CD8-positive, alpha-beta T cell (primary cell): ENCODE measurements at regions of chr7 and their contacts with region 1.

Region 1: GRCh38 chr7:27739909-27740448 is at the start of gene TAX1BP1:
- DNase-seq: peak; percentile 88 to 98 (median 96)
- ATAC-seq: peak; percentile 91
- H3K4me3 ChIP-seq: peak within 1 kb of the TSS; percentile 97 to 100
- H3K4me3 Mint-ChIP-seq: peak within 1 kb of the TSS; percentile 99
- H3K27ac ChIP-seq: peak within 1 kb of the TSS; percentile 97 to 99
- H3K27ac Mint-ChIP-seq: peak within 1 kb of the TSS; percentile 99
- H3K4me1 ChIP-seq: peaks cover 27% of the 10 kb centered on the region
- H3K4me1 Mint-ChIP-seq: peaks cover 40% of the 10 kb centered on the region
- H3K27me3 ChIP-seq: no peaks in the 10 kb centered on the region
- H3K27me3 Mint-ChIP-seq: no peaks in the 10 kb centered on the region
- CTCF ChIP-seq: no peak
- total RNA-seq, gene TAX1BP1: 132 to 139 TPM

Region 2: GRCh38 chr7:25951031-25951948 is 1788.7 kb before region 1 on chr7:
- CTCF ChIA-PET with region 1: no interaction called
- POLR2A ChIA-PET with region 1: no interaction called
- intact Hi-C with region 1: loop called in 1 of 2 experiments (anchors 5 kb)
- DNase-seq: peak; percentile 70 to 93 (median 87)
- ATAC-seq: peak; percentile 97
- H3K4me3 ChIP-seq: peak overlapping the region; percentile 54 to 65
- H3K4me3 Mint-ChIP-seq: peak overlapping the region; percentile 90
- H3K27ac ChIP-seq: peak overlapping the region in 1 of 2 experiments; percentile 27
- H3K27ac Mint-ChIP-seq: peak overlapping the region; percentile 76
- H3K4me1 ChIP-seq: peaks cover 18% of the 10 kb centered on the region
- H3K4me1 Mint-ChIP-seq: peaks cover 22% of the 10 kb centered on the region
- H3K27me3 ChIP-seq: no peaks in the 10 kb centered on the region
- H3K27me3 Mint-ChIP-seq: peaks cover 2% of the 10 kb centered on the region
- CTCF ChIP-seq: no peak

Region 3: DNA sequence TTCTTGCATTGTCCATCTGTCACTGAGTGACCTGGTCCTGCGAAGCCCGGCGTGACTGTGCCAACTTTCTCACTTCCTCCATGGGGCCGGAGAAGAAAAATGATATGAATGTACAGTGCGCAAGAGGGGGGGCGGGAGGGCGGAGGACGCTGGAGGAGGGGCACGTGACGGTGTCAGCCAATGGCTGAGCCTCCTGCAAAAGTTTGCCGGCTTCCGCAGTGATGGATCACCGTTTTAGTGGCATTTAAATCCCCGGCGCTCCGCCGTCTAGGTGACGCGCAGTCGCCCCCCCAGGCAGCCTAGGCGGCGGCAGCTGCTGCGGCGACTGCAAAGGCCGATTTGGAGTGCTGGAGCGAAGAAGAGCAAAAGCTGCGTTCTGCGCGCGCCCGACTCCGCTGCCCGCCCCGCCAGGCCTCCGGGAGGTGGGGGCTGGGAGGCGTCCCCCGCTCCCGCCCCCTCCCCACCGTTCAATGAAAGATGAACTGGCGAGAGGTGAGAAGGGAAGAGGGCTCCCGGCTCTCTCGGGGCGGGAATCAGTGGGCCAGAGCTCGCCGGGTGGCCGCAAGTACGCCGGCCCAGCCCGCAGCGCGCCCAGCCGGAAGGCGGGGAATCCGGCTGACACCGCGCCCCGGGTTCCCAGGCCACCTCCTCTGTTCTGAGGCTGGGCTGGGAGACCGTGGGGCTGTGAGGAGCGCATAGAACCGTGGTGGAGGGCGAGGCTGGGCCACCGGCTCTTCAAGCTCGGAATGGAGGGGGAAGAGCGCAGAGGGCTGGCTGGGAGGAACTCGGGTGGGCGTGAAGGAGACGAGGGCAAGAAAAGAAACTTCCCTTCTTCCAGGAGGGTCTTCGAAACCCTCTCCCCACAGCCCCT is 643.8 kb before region 1 on chr7 and contains the start of gene HOXA1:
- CTCF ChIA-PET with region 1: no interaction called
- POLR2A ChIA-PET with region 1: no interaction called
- intact Hi-C with region 1: loop called (anchors 5 to 10 kb)
- DNase-seq: peak; percentile 44 to 90 (median 74)
- ATAC-seq: peak; percentile 91
- H3K4me3 ChIP-seq: peak within 1 kb of the TSS; percentile 76 to 80
- H3K4me3 Mint-ChIP-seq: peak within 1 kb of the TSS; percentile 90
- H3K27ac ChIP-seq: peak within 1 kb of the TSS; percentile 42 to 46
- H3K27ac Mint-ChIP-seq: peak within 1 kb of the TSS; percentile 82
- H3K4me1 ChIP-seq: peaks cover 21% of the 10 kb centered on the region
- H3K4me1 Mint-ChIP-seq: peaks cover 35% of the 10 kb centered on the region
- H3K27me3 ChIP-seq: peaks cover 0 to 15% of the 10 kb centered on the region in 2 experiments
- H3K27me3 Mint-ChIP-seq: peaks cover 42% of the 10 kb centered on the region
- CTCF ChIP-seq: no peak
- total RNA-seq, gene HOXA1: 0.79 to 0.83 TPM

Region 4: GRCh38 chr7:27662490-27663205 is 77.3 kb before region 1 on chr7 and contains the start of gene HIBADH:
- CTCF ChIA-PET with region 1: interaction called, 6 read pairs
- POLR2A ChIA-PET with region 1: interaction called, 55 read pairs
- intact Hi-C with region 1: loop called (anchors 1 kb)
- DNase-seq: peak; percentile 90 to 99 (median 94)
- ATAC-seq: peak; percentile 92
- H3K4me3 ChIP-seq: peak within 1 kb of the TSS; percentile 70 to 97
- H3K4me3 Mint-ChIP-seq: peak within 1 kb of the TSS; percentile 88
- H3K27ac ChIP-seq: peak within 1 kb of the TSS; percentile 79 to 84
- H3K27ac Mint-ChIP-seq: peak within 1 kb of the TSS; percentile 94
- H3K4me1 ChIP-seq: peaks cover 20% of the 10 kb centered on the region
- H3K4me1 Mint-ChIP-seq: peaks cover 33% of the 10 kb centered on the region
- H3K27me3 ChIP-seq: no peaks in the 10 kb centered on the region
- H3K27me3 Mint-ChIP-seq: no peaks in the 10 kb centered on the region
- CTCF ChIP-seq: no peak
- total RNA-seq, gene HIBADH: 6.8 to 7.3 TPM

Region 5: DNA sequence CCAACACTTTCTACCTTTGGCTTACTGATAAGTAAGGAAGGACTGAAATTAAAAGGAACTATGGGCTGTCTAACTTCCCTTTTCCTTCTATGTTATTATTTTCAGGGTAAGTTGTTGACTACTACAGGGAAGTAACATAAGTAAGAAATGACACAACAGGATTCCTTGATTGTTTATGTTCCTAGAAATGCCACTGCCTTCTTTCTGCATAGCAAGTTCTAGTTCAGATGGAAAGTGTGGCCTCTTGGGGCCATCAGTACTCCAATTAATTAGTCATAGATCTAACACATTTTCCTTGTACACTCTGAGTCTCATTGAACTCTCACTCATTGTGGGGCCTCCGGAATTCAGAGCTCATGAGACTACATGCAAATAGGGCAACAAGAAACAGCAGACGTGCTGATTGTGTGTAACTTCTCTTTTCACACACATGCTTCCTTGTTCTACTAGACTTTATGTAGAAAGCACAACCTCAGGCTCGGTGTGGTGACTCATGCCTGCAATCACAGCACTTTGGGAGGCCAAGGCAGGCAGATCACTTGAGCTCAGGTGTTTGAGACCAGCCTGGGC is 42.0 kb before region 1 on chr7:
- CTCF ChIA-PET with region 1: interaction called, 3 read pairs
- POLR2A ChIA-PET with region 1: no interaction called
- intact Hi-C with region 1: loop called in 1 of 2 experiments (anchors 5 kb)
- DNase-seq: peak in 1 of 9 experiments; percentile 17
- ATAC-seq: no peak
- H3K4me3 ChIP-seq: no peak overlapping the region
- H3K4me3 Mint-ChIP-seq: no peak overlapping the region
- H3K27ac ChIP-seq: no peak overlapping the region
- H3K27ac Mint-ChIP-seq: no peak overlapping the region
- H3K4me1 ChIP-seq: no peaks in the 10 kb centered on the region
- H3K4me1 Mint-ChIP-seq: no peaks in the 10 kb centered on the region
- H3K27me3 ChIP-seq: no peaks in the 10 kb centered on the region
- H3K27me3 Mint-ChIP-seq: peaks cover 15% of the 10 kb centered on the region
- CTCF ChIP-seq: no peak

Region 6: GRCh38 chr7:27784393-27785053 is 44.5 kb after region 1 on chr7:
- CTCF ChIA-PET with region 1: interaction called, 3 read pairs
- POLR2A ChIA-PET with region 1: interaction called, 4 read pairs
- intact Hi-C with region 1: loop called (anchors 5 kb)
- DNase-seq: peak in 3 of 9 experiments; percentile 23 to 69 (median 61)
- ATAC-seq: peak; percentile 64
- H3K4me3 ChIP-seq: no peak overlapping the region
- H3K4me3 Mint-ChIP-seq: no peak overlapping the region
- H3K27ac ChIP-seq: no peak overlapping the region
- H3K27ac Mint-ChIP-seq: peak overlapping the region; percentile 4
- H3K4me1 ChIP-seq: no peaks in the 10 kb centered on the region
- H3K4me1 Mint-ChIP-seq: peaks cover 12% of the 10 kb centered on the region
- H3K27me3 ChIP-seq: no peaks in the 10 kb centered on the region
- H3K27me3 Mint-ChIP-seq: no peaks in the 10 kb centered on the region
- CTCF ChIP-seq: peak; percentile 80

Region 7: GRCh38 chr7:28179120-28180030 is 439.4 kb after region 1 on chr7:
- CTCF ChIA-PET with region 1: no interaction called
- POLR2A ChIA-PET with region 1: no interaction called
- intact Hi-C with region 1: loop called in 1 of 2 experiments (anchors 5 kb)
- DNase-seq: peak; percentile 45 to 88 (median 74)
- ATAC-seq: peak; percentile 70
- H3K4me3 ChIP-seq: peak overlapping the region; percentile 27 to 38
- H3K4me3 Mint-ChIP-seq: peak overlapping the region; percentile 82
- H3K27ac ChIP-seq: peak overlapping the region; percentile 12 to 21
- H3K27ac Mint-ChIP-seq: peak overlapping the region; percentile 60
- H3K4me1 ChIP-seq: peaks cover 7% of the 10 kb centered on the region
- H3K4me1 Mint-ChIP-seq: peaks cover 15% of the 10 kb centered on the region
- H3K27me3 ChIP-seq: no peaks in the 10 kb centered on the region
- H3K27me3 Mint-ChIP-seq: no peaks in the 10 kb centered on the region
- CTCF ChIP-seq: no peak